ENCODE measurements at regions of chr6 and their contacts with region 1.

Region 1: DNA sequence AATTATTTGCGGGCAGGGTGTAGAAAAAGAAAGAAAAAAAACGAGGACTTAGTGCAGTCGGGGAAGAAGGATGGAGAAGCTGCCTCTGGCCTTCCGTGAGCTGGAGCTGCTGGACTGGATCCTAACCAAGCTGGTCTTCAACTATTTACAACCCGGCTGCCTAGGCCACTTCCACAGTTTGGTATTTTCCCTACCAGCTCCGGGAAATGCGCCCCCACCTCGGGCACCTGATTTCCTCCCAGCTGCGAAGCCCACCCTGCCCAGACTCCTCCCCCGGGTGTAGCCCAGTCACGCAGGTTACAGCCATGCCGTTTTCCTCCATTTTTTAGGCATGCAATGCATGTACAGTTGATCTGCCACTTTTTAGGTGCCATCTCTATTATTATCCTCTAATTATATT is 21.2 kb downstream of the THEMIS start:
- DNase-seq: no peak
- H3K4me3 Mint-ChIP-seq: peak overlapping the region; percentile 58
- H3K27ac Mint-ChIP-seq: peak overlapping the region; percentile 72
- H3K4me1 Mint-ChIP-seq: peaks cover 52% of the 10 kb centered on the region
- H3K27me3 Mint-ChIP-seq: no peaks in the 10 kb centered on the region

Region 2: GRCh38 chr6:127893541-127893940 is 13.9 kb after region 1 on chr6:
- intact Hi-C with region 1: loop called (anchors 1 kb)
- DNase-seq: no peak
- H3K4me3 Mint-ChIP-seq: peak overlapping the region; percentile 60
- H3K27ac Mint-ChIP-seq: peak overlapping the region; percentile 69
- H3K4me1 Mint-ChIP-seq: peaks cover 45% of the 10 kb centered on the region
- H3K27me3 Mint-ChIP-seq: no peaks in the 10 kb centered on the region

Region 3: DNA sequence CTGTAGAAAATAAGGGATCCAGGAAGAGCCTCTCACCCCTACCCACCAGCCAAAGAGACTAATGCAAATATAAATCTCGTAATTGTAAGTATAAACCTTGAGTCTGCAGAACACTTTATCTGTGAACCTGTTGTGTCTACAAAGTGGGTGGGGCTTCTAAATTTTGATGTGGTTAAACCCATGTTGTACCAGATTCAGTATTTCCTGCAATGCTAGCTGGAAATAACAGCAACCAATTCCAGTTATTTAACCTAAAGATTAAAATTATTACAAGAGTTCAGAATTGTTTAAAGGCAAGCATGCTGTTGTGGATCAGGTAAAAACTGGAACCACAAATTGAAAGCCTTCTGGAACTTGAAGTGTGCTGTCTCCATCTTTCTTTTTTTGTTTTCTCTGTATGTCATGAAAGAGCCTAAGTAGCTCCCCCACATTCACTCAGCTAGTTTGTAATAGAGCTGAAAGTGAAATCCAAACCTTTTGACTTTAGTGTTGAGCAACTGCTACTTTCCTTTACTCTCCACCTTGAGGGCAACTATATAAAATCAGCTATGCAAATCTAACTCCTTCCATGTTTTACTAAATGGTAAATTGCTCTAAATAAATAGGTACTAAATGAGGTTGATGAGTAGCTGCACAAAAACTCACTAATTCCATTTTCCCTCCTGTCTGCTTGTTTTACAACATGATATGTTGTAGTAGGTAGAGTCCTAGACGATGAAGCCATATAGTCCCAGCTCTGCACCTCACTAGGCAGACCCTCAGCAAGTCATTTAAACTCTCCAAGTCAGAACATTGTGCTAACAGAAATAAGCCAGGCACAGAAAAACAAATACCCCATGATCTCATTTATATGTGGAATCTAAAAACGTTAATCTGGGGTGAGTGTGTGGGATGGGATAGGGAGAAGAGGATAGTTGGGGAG is 39.1 kb after region 1 on chr6:
- intact Hi-C with region 1: no loop called
- DNase-seq: no peak
- H3K4me3 Mint-ChIP-seq: peak overlapping the region; percentile 26
- H3K27ac Mint-ChIP-seq: peak overlapping the region; percentile 30
- H3K4me1 Mint-ChIP-seq: peaks cover 64% of the 10 kb centered on the region
- H3K27me3 Mint-ChIP-seq: no peaks in the 10 kb centered on the region

Region 4: DNA sequence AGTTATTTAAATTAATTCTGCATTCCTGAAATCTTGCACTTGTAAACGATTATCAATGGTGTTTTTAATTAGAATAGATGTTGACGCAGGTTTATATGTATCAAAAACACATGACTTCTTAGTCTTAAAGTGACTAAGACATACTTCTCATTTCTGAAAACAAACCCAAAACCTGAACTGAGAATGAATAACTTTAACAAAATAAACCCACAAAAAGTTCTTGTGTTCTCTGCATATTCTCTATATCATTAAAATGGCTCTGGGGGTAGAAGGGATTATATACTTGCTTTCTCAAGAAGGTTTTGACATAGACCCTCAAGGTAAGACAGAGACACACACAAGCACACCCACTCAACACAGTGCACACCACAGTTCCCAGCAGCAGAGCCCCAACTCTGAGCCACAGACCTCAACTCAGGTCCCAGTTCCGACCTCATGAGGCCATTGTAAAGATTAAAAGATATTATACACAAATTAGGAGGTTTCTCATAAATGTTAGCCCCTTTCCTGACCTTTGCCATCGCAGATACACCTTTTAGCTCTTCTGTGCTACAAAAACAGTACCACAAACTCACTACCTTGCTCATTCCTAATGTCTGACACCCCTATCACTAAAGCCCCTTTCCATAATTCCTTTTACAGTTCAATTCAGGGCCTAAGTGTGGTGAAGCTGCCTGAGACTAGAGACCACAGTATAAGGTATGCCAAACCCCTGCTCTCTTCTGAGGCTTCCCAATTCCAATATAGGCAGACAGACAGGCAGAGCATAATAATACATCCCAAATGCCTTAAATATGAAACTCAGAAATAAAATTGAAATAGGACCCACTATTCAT is 372.9 kb after region 1 on chr6:
- intact Hi-C with region 1: no loop called
- DNase-seq: no peak
- H3K4me3 Mint-ChIP-seq: no peak overlapping the region
- H3K27ac Mint-ChIP-seq: peak overlapping the region; percentile 7
- H3K4me1 Mint-ChIP-seq: peaks cover 21% of the 10 kb centered on the region
- H3K27me3 Mint-ChIP-seq: peaks cover 18% of the 10 kb centered on the region